CD8-positive, alpha-beta T cell (primary cell): ENCODE measurements at regions of chr11 and their contacts with region 1.

Region 1: GRCh38 chr11:22752908-22753310 is 76.7 kb downstream of the SVIP start:
- DNase-seq: no peak
- ATAC-seq: no peak
- H3K4me3 ChIP-seq: no peak overlapping the region
- H3K4me3 Mint-ChIP-seq: no peak overlapping the region
- H3K27ac ChIP-seq: no peak overlapping the region
- H3K27ac Mint-ChIP-seq: no peak overlapping the region
- H3K4me1 ChIP-seq: no peaks in the 10 kb centered on the region
- H3K4me1 Mint-ChIP-seq: no peaks in the 10 kb centered on the region
- H3K27me3 ChIP-seq: no peaks in the 10 kb centered on the region
- H3K27me3 Mint-ChIP-seq: no peaks in the 10 kb centered on the region
- CTCF ChIP-seq: no peak

Region 2: GRCh38 chr11:22521226-22521625 is 231.7 kb before region 1 on chr11:
- CTCF ChIA-PET with region 1: no interaction called
- POLR2A ChIA-PET with region 1: no interaction called
- intact Hi-C with region 1: no loop called
- DNase-seq: no peak
- ATAC-seq: no peak
- H3K4me3 ChIP-seq: no peak overlapping the region
- H3K4me3 Mint-ChIP-seq: no peak overlapping the region
- H3K27ac ChIP-seq: no peak overlapping the region
- H3K27ac Mint-ChIP-seq: no peak overlapping the region
- H3K4me1 ChIP-seq: no peaks in the 10 kb centered on the region
- H3K4me1 Mint-ChIP-seq: no peaks in the 10 kb centered on the region
- H3K27me3 ChIP-seq: no peaks in the 10 kb centered on the region
- H3K27me3 Mint-ChIP-seq: peaks cover 2% of the 10 kb centered on the region
- CTCF ChIP-seq: no peak

Region 3: GRCh38 chr11:22567759-22568158 is 185.2 kb before region 1 on chr11:
- CTCF ChIA-PET with region 1: no interaction called
- POLR2A ChIA-PET with region 1: no interaction called
- intact Hi-C with region 1: loop called in 1 of 2 experiments (anchors 10 kb)
- DNase-seq: no peak
- ATAC-seq: no peak
- H3K4me3 ChIP-seq: no peak overlapping the region
- H3K4me3 Mint-ChIP-seq: no peak overlapping the region
- H3K27ac ChIP-seq: no peak overlapping the region
- H3K27ac Mint-ChIP-seq: no peak overlapping the region
- H3K4me1 ChIP-seq: no peaks in the 10 kb centered on the region
- H3K4me1 Mint-ChIP-seq: no peaks in the 10 kb centered on the region
- H3K27me3 ChIP-seq: no peaks in the 10 kb centered on the region
- H3K27me3 Mint-ChIP-seq: peaks cover 14% of the 10 kb centered on the region
- CTCF ChIP-seq: no peak

Region 4: DNA sequence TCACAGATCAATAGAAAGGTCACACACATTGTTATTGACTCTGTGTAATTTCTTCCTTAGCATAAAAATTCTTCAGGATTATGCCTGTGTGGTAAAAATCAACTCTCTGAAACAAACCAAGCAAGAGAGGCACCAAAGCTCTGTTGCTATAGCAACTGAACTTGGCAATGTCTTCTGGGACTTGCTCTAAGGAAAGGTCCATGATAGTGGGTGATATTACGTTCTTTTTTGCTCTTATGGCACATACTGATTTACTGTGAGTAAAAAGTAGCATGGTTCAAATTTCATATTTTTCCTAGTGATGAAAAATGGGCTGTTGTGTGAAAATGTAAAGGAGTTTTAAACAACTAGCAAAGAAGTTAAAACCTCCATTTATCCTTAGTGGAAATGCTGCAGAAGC is 10.3 kb after region 1 on chr11:
- CTCF ChIA-PET with region 1: no interaction called
- POLR2A ChIA-PET with region 1: no interaction called
- intact Hi-C with region 1: no loop called
- DNase-seq: no peak
- ATAC-seq: no peak
- H3K4me3 ChIP-seq: no peak overlapping the region
- H3K4me3 Mint-ChIP-seq: no peak overlapping the region
- H3K27ac ChIP-seq: no peak overlapping the region
- H3K27ac Mint-ChIP-seq: no peak overlapping the region
- H3K4me1 ChIP-seq: no peaks in the 10 kb centered on the region
- H3K4me1 Mint-ChIP-seq: no peaks in the 10 kb centered on the region
- H3K27me3 ChIP-seq: no peaks in the 10 kb centered on the region
- H3K27me3 Mint-ChIP-seq: no peaks in the 10 kb centered on the region
- CTCF ChIP-seq: no peak